Activated CD4-positive, alpha-beta T cell treated with anti-CD3 and anti-CD28 coated beads for 36 hours (primary cell): ENCODE measurements at regions of chr1 and their contacts with region 1.

Region 1: GRCh38 chr1:184664042-184664655 is 90.5 kb downstream of the EDEM3 start:
- DNase-seq: peak; percentile 79
- ATAC-seq: peak; percentile 69
- H3K4me3 Mint-ChIP-seq: no peak overlapping the region
- H3K27ac Mint-ChIP-seq: no peak overlapping the region
- H3K4me1 Mint-ChIP-seq: peaks cover 3% of the 10 kb centered on the region
- H3K27me3 Mint-ChIP-seq: no peaks in the 10 kb centered on the region

Region 2: DNA sequence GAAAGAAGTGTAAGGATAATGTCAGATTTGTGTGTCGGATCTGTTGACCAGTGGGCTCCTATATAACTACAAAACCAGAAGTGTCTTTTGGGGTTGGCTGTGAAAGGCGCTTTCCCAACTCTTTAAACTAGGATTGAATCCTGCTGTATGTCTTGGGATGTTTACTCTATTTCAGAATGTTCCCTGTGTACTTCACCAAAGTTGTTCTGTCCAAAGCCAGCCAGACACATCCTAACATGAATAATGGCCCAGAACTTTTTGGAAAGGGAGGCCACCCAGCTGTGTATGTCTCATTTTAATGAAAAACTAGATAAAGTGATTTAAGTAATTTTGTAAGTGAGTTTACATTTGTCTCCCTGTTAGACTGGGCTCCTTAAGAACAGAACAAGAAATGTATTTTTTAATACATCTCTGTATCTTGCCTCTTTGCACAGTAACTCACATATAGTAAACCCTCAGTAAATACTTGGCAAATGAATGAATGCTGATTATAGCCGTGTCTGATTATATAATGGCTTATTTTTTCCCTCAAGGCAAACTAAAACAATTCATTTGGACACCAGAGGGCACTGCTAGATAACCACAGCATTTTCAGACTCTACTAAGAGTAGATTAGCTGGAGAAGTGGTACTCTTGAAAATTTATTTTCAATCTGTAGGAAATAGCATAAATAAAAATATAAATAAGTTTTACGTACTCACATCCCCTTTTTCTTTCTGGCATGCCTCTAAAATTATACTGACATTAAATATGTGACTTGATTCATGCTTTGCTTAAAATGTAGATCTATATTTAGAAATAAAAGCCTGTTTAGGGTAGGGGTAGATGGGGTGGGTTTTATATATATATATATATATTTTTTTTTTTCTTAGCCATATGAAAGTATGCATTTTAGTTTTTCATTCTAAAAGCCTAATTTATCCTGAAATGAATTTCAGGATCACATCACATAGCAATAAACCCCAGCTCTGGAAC is 588.8 kb before region 1 on chr1:
- CTCF ChIA-PET with region 1: interaction called, 7 read pairs
- POLR2A ChIA-PET with region 1: no interaction called
- intact Hi-C with region 1: loop called in 1 of 2 experiments (anchors 2 kb)
- DNase-seq: peak; percentile 19
- ATAC-seq: no peak
- H3K4me3 Mint-ChIP-seq: no peak overlapping the region
- H3K27ac Mint-ChIP-seq: no peak overlapping the region
- H3K4me1 Mint-ChIP-seq: peaks cover 19% of the 10 kb centered on the region
- H3K27me3 Mint-ChIP-seq: no peaks in the 10 kb centered on the region

Region 3: DNA sequence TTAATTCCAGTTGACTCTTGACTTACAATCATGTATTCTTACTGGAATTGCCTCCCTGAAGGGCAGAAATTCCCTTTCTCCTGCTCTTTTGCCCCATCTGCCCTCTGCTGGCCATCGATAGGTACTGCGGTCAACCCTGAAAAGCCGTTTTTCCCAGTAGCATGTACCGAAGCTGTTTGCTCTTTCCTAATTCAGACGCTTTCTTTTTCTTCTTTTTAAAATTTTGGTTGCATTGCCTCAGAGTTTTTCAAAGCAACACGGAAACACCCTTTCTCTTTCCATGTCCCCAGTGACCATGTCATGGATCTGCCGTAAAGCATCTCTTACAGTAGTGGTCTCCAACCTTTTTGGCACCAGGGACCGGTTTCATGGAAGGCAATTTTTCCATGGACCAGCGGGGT is 441.5 kb before region 1 on chr1:
- CTCF ChIA-PET with region 1: interaction called, 3 read pairs
- POLR2A ChIA-PET with region 1: interaction called, 4 read pairs
- intact Hi-C with region 1: loop called (anchors 5 to 10 kb)
- DNase-seq: peak; percentile 62
- ATAC-seq: no peak
- H3K4me3 Mint-ChIP-seq: no peak overlapping the region
- H3K27ac Mint-ChIP-seq: no peak overlapping the region
- H3K4me1 Mint-ChIP-seq: no peaks in the 10 kb centered on the region
- H3K27me3 Mint-ChIP-seq: no peaks in the 10 kb centered on the region

Region 4: DNA sequence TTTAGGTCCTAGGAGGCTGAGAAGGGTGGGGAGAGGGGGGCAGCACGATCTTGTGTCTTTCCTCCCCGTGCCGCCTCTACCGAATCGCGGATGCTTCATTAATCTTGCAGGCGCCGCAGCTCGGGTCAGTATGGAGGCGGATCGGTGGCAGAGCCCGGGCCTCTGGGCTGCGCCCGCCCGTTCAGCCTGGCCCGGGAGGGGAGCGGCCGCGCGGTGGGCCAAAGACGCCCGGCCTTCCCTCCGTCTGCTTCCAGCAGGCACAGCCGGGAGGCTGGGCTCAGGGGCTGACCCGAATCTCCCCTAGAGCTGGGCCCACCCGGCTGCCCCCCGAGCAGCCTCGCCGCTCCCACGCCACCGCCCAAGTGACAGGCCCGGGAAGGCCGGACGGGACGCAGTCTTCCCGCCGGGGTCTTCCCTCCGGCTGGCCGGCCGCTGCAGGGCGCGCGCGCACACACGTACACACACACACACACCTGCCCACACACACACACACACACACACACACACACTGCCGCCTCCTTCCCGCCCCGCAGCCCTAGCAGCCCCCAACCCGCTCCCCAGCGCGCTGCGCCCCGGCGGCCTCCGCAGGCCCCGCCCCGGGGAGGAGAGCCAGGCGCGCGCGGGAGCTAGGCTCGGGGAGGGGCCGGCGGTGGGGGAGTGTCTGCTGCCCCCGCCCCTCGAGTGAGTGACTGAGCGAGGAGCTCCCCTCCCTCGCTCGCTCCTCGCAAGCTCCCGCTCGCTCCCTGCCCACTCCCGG is 277.7 kb before region 1 on chr1 and contains the start of gene C1orf21:
- CTCF ChIA-PET with region 1: interaction called, 5 read pairs
- POLR2A ChIA-PET with region 1: interaction called, 3 read pairs
- intact Hi-C with region 1: loop called in 1 of 2 experiments (anchors 10 kb)
- DNase-seq: peak; percentile 89
- ATAC-seq: peak; percentile 95
- H3K4me3 Mint-ChIP-seq: peak within 1 kb of the TSS; percentile 66
- H3K27ac Mint-ChIP-seq: peak within 1 kb of the TSS; percentile 38
- H3K4me1 Mint-ChIP-seq: peaks cover 12% of the 10 kb centered on the region
- H3K27me3 Mint-ChIP-seq: peaks cover 44% of the 10 kb centered on the region
- total RNA-seq, gene C1orf21: 2.6 to 6.1 TPM

Region 5: DNA sequence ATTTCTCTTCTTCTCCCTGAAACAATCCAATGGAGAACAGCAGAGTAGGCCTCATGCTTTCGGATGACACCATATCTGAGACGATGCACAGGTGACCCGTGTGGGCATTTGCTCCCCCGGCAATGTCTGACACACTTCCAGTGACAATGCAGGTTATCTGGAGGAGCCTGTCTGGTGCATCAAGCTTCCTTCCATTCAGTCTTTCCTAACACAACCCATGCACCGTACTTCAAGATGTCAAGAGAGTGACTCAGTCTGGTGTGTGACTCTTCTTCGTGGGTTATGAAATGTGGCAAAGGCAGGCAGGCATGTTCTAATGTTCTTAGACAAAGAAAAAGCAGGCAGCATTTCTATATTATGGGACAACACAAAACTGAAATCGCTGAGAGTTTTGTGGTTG is 68.6 kb before region 1 on chr1:
- CTCF ChIA-PET with region 1: no interaction called
- POLR2A ChIA-PET with region 1: no interaction called
- intact Hi-C with region 1: no loop called
- DNase-seq: no peak
- ATAC-seq: peak; percentile 39
- H3K4me3 Mint-ChIP-seq: no peak overlapping the region
- H3K27ac Mint-ChIP-seq: no peak overlapping the region
- H3K4me1 Mint-ChIP-seq: no peaks in the 10 kb centered on the region
- H3K27me3 Mint-ChIP-seq: no peaks in the 10 kb centered on the region

Region 6: GRCh38 chr1:184649451-184649888 is 14.7 kb before region 1 on chr1:
- CTCF ChIA-PET with region 1: interaction called, 13 read pairs
- POLR2A ChIA-PET with region 1: no interaction called
- intact Hi-C with region 1: no loop called
- DNase-seq: no peak
- ATAC-seq: no peak
- H3K4me3 Mint-ChIP-seq: no peak overlapping the region
- H3K27ac Mint-ChIP-seq: no peak overlapping the region
- H3K4me1 Mint-ChIP-seq: no peaks in the 10 kb centered on the region
- H3K27me3 Mint-ChIP-seq: peaks cover 8% of the 10 kb centered on the region

Region 7: GRCh38 chr1:185008838-185009237 is 344.7 kb after region 1 on chr1:
- CTCF ChIA-PET with region 1: no interaction called
- POLR2A ChIA-PET with region 1: no interaction called
- intact Hi-C with region 1: no loop called
- DNase-seq: no peak
- ATAC-seq: no peak
- H3K4me3 Mint-ChIP-seq: no peak overlapping the region
- H3K27ac Mint-ChIP-seq: no peak overlapping the region
- H3K4me1 Mint-ChIP-seq: no peaks in the 10 kb centered on the region
- H3K27me3 Mint-ChIP-seq: no peaks in the 10 kb centered on the region